AG04450 (cell line): ENCODE measurements at regions of chr3 and their contacts with region 1.

Region 1: DNA sequence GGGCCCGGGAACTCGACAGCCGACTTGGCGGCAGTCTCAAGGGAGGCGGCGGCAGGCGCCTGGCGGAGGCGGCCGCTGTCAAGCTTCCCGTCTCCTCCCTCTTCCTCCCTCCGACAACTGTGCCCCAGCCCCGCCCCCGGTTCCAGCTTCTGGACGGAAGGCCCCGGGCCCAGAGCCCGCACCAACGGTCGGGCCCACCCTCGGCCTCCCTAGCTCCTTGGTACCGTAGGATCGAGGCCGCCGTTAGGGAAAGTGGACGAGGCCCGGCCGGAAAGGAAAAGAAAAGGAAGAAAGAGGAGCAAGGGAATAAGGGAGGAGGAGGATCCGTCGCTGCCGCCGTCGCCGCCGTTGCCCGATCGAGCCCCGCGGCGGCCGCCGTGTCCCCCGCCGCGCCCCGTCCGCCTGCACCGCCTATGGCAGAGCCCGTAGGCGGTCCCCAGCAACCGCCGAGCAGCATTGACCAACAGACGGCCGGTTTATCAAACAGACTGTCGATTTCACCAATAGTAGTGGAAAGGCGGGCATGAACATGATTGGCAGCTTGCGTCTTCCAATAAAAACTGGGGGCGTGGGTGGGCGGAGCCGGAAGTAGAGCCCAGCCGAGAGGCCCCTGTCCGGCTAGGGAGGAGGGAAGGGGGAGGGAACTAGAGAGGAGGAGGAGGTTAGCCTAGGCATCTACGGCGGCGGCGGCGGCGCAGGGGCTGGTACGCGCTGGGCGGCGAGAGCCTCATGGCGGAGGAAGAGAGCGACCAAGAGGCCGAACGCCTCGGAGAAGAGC is at the starts of genes CGGBP1 and ZNF654:
- DNase-seq: peak; percentile 97
- H3K4me3 ChIP-seq: peak within 1 kb of the TSS; percentile 95
- H3K27ac ChIP-seq: peak within 1 kb of the TSS; percentile 90
- H3K27me3 ChIP-seq: no peaks in the 10 kb centered on the region
- CTCF ChIP-seq: no peak
- polyA plus RNA-seq, gene CGGBP1: 88.1 and 109 TPM in 2 replicates
- polyA plus RNA-seq, gene ZNF654: 5.2 and 6.7 TPM in 2 replicates

Region 2: GRCh38 chr3:88013592-88013991 is 45.2 kb before region 1 on chr3:
- CTCF ChIA-PET with region 1: no interaction called
- POLR2A ChIA-PET with region 1: no interaction called
- DNase-seq: no peak
- H3K4me3 ChIP-seq: no peak overlapping the region
- H3K27ac ChIP-seq: no peak overlapping the region
- H3K27me3 ChIP-seq: peaks cover 3% of the 10 kb centered on the region
- CTCF ChIP-seq: no peak

Region 3: DNA sequence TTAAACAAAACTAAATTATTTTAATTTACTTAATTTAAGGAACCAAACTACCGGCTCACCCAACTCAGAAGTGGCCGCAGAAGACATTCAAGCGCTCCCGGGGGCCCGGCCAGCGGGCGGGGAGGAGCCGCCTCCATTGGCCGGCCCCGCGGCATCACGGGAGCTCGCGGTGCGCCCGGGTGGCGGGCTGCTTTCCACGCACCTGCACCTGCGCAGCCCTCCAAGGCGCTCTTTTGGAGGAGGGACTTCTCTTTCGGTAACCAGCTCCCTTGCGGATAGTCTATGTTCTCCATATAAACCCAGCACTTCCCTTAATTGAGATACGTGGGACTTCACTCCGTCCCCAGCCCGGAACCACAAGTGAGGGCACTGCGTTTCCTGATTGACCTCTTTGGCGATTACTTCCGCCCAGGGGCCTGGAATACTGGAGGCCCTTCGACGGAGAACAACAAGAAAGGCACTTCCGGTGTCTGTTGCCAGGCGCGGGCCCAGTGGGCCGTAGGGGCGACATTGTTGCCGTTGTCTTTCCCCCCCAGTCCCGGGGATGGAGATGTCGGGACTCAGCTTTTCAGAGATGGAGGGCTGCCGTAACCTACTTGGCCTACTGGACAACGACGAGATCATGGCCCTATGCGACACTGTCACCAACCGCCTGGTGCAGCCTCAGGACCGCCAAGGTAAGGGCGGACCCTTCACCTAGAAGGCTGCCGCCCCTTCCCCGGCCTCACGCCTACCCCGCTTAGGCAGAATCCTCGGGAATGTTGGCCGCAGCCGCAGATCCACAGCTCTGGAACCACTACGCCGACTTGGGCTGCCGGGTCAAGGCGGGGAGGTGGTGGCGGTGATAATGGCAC is 91.0 kb after region 1 on chr3 and contains the start of gene C3orf38:
- CTCF ChIA-PET with region 1: interaction called, 5 read pairs
- POLR2A ChIA-PET with region 1: interaction called, 17 read pairs
- DNase-seq: peak; percentile 69
- H3K4me3 ChIP-seq: peak within 1 kb of the TSS; percentile 100
- H3K27ac ChIP-seq: peak within 1 kb of the TSS; percentile 85
- H3K27me3 ChIP-seq: no peaks in the 10 kb centered on the region
- CTCF ChIP-seq: no peak
- polyA plus RNA-seq, gene C3orf38: 18.0 and 22.6 TPM in 2 replicates